ENCODE measurements at regions of chr9 and their contacts with region 1.

Region 1: DNA sequence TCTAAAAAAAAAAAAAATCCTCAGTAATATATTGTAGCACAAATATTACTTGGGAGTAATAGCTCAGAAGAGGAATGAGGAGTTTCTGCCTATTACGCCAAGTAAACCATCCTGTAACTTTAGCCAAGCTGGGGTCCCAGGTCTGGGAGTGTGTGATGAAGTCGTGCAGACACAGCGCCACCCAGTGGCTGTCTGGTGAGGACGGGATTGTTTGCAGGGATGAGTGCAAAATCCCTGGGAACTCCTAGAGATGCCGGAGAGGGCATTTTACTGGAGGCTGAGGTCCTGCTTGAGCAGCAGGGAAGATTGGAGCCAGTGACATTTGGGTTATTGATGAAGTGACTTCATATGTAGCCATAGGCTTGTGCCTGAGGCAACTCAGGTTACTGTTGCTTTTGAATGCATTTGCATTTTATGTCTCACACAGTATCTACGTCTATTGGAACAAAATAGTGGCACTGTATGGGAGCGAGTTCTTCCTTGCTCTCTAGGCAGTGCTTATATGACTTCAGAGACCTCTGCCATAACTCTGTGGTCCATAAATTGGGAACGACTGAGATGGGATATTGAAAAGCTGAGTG is 72.8 kb downstream of the PSAT1 start:
- DNase-seq: peak; percentile 66
- H3K4me3 ChIP-seq: no peak overlapping the region
- H3K27ac ChIP-seq: no peak overlapping the region
- H3K4me1 ChIP-seq: no peaks in the 10 kb centered on the region
- H3K27me3 ChIP-seq: peaks cover 22% of the 10 kb centered on the region
- CTCF ChIP-seq: peak; percentile 66 to 83 (median 72)
- EP300 ChIP-seq: no peak
- POLR2A ChIP-seq: no peak

Region 2: DNA sequence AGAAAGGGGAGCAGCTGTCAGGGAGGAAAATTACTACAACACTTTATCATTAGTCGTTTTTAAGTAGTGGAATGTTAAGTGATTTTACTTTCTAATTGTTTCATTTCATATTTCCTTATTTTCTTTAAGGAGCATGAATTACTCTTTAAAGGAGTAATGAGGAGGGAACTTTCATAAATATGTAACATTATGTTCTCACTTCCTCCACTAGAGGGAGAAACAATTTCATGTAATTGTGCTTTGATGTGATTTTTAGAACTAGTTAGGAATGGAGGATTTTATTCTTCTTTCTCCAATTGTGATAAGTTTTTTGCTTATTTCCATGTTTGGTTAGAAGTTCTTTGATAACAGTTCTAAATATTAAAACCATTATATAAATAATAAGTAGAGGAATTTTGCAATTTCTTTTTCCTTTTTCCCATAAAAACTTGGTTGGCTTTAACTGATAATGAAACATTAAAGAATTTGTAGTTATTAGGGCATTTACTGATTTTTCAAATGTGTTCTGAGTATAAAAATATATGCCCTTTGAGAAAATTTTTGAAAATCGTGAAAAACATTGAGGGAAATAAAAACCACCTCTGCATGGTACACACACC is 108.2 kb before region 1 on chr9:
- in situ Hi-C with region 1: loop called (anchors 5 to 25 kb)
- intact Hi-C with region 1: loop called (anchors 5 kb)
- DNase-seq: no peak
- H3K4me3 ChIP-seq: no peak overlapping the region
- H3K27ac ChIP-seq: no peak overlapping the region
- H3K4me1 ChIP-seq: no peaks in the 10 kb centered on the region
- H3K27me3 ChIP-seq: no peaks in the 10 kb centered on the region
- CTCF ChIP-seq: peak; percentile 57 to 73 (median 66)
- EP300 ChIP-seq: no peak
- POLR2A ChIP-seq: no peak

Region 3: GRCh38 chr9:78267889-78268288 is 101.8 kb before region 1 on chr9:
- in situ Hi-C with region 1: loop called (anchors 5 to 25 kb)
- intact Hi-C with region 1: loop called (anchors 5 kb)
- DNase-seq: no peak
- H3K4me3 ChIP-seq: no peak overlapping the region
- H3K27ac ChIP-seq: no peak overlapping the region
- H3K4me1 ChIP-seq: no peaks in the 10 kb centered on the region
- H3K27me3 ChIP-seq: no peaks in the 10 kb centered on the region
- CTCF ChIP-seq: no peak
- EP300 ChIP-seq: no peak
- POLR2A ChIP-seq: no peak